Mammary epithelial cell (primary cell): ENCODE measurements at regions of chr13 and their contacts with region 1.

Region 1: DNA sequence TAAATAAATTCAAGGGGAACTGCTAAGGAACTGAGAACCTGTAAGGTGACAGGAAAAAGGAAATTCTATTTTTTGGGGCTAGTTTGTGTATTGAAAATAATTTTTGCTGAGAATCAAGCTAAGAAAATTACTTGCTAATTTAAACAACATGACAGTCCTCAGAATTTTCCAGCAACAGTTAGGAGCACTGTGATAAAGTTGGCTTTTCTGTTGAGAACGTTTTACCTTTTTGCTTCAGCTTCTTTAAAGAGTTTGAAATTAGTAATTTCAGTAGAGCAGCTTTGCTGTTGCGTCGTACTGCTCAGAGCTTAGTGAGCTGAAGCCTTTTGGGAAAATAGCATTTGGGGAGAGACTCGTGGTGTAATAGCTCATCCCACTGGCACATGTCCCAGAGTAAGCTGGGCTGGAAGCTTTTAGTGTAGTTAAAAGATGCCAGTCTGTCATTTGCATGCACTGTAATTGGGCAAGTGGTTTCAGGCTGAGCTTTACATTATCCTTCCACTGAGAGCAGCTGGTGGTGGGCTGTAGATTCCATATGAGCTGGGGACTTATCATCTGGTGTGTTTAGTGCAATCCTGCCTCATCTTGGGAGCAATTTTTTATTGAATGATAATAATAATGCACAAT is 69.8 kb downstream of the LRCH1 start:
- DNase-seq: peak; percentile 53
- H3K4me3 ChIP-seq: no peak overlapping the region
- H3K27ac ChIP-seq: no peak overlapping the region
- H3K4me1 ChIP-seq: peaks cover 8% of the 10 kb centered on the region
- H3K27me3 ChIP-seq: no peaks in the 10 kb centered on the region
- CTCF ChIP-seq: no peak

Region 2: DNA sequence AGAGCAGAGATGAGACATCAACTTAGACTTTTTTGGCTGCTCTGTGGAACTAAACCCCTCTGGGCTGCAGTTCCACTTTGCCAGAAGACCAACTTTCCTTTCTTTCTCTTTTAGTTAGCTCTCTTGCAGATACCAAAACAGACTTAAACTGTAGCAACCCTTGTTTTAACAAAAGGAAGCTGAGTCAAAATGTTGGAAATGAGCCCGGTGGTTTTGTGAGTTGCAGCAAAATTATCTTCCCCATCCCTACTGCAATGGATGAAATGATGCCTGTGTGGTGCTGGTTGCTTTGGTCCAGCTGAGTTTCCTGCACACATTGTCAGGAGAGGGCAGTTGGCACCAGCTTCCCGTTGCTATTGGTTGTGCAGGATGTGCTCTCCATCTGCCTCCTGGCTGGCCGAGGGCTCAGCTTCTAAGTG is 45.6 kb after region 1 on chr13:
- CTCF ChIA-PET with region 1: no interaction called
- dilution Hi-C with region 1: no loop called
- in situ Hi-C with region 1: no loop called
- intact Hi-C with region 1: loop called (anchors 5 kb)
- DNase-seq: peak; percentile 78
- H3K4me3 ChIP-seq: no peak overlapping the region
- H3K27ac ChIP-seq: no peak overlapping the region
- H3K4me1 ChIP-seq: peaks cover 6% of the 10 kb centered on the region
- H3K27me3 ChIP-seq: no peaks in the 10 kb centered on the region
- CTCF ChIP-seq: no peak